Activated CD4-positive, alpha-beta memory T cell treated with anti-CD3 and anti-CD28 coated beads, Interleukin-2, amount 10 ng/mL, durations not matched to agents 7 days and 5 days (primary cell): ENCODE measurements at regions of chr20 and their contacts with region 1.

Region 1: DNA sequence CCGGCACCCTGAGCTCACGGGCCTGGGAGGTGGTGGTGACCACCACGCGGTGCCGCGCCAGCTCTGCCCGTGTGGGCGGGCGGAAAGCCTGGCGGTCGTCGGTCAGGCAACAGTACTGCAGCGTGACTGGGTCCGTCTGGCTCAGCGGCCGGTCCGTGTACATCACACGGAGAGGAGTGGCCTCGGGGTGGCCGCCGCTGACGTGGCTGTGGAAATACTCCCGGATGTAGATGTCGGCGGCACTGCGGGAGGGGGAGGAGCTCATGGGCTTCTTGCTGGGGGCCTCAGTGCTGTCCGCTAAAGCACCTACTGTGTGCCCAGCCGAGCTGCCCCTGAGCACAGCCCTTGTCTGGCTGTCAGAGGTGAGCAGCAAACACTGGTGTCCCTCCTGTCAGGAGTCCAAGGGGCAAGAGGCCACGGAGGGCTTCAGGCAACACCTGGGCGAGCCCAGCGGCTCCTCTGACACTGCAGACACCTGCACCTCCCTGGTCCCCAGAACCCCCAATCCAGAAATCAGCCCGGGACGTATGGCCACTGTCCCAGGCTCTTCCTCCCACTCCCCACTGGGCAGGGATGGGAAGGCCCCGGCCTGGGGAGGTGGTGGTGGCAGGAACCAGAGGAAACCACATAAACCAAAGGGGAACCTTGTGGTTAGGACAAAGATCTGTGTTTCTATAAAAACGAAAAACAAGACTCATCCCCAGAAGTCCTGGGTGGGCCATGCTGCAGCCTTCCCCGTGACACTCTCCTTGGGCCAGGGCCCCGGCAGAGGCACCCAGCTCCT is 6.5 kb downstream of the HELZ2 start:
- DNase-seq: peak; percentile 76
- H3K4me3 Mint-ChIP-seq: peak overlapping the region; percentile 63
- H3K27ac Mint-ChIP-seq: peak overlapping the region; percentile 73
- H3K4me1 Mint-ChIP-seq: peaks cover 32% of the 10 kb centered on the region
- H3K27me3 Mint-ChIP-seq: no peaks in the 10 kb centered on the region

Region 2: GRCh38 chr20:63434599-63435378 is 132.8 kb before region 1 on chr20:
- CTCF ChIA-PET with region 1: no interaction called
- POLR2A ChIA-PET with region 1: no interaction called
- DNase-seq: peak; percentile 83
- H3K4me3 Mint-ChIP-seq: no peak overlapping the region
- H3K27ac Mint-ChIP-seq: peak overlapping the region; percentile 55
- H3K4me1 Mint-ChIP-seq: peaks cover 10% of the 10 kb centered on the region
- H3K27me3 Mint-ChIP-seq: peaks cover 10% of the 10 kb centered on the region

Region 3: GRCh38 chr20:63553227-63553932 is 14.2 kb before region 1 on chr20:
- CTCF ChIA-PET with region 1: no interaction called
- POLR2A ChIA-PET with region 1: interaction called, 19 read pairs
- DNase-seq: peak; percentile 90
- H3K4me3 Mint-ChIP-seq: peak overlapping the region; percentile 41
- H3K27ac Mint-ChIP-seq: peak overlapping the region; percentile 77
- H3K4me1 Mint-ChIP-seq: peaks cover 15% of the 10 kb centered on the region
- H3K27me3 Mint-ChIP-seq: peaks cover 23% of the 10 kb centered on the region

Region 4: GRCh38 chr20:63617092-63617865 is 49.7 kb after region 1 on chr20:
- CTCF ChIA-PET with region 1: no interaction called
- POLR2A ChIA-PET with region 1: no interaction called
- DNase-seq: no peak
- H3K4me3 Mint-ChIP-seq: no peak overlapping the region
- H3K27ac Mint-ChIP-seq: no peak overlapping the region
- H3K4me1 Mint-ChIP-seq: peaks cover 4% of the 10 kb centered on the region
- H3K27me3 Mint-ChIP-seq: no peaks in the 10 kb centered on the region

Region 5: GRCh38 chr20:63635431-63636141 is 68.0 kb after region 1 on chr20:
- CTCF ChIA-PET with region 1: no interaction called
- POLR2A ChIA-PET with region 1: interaction called, 11 read pairs
- DNase-seq: peak; percentile 86
- H3K4me3 Mint-ChIP-seq: peak overlapping the region; percentile 49
- H3K27ac Mint-ChIP-seq: peak overlapping the region; percentile 96
- H3K4me1 Mint-ChIP-seq: peaks cover 56% of the 10 kb centered on the region
- H3K27me3 Mint-ChIP-seq: no peaks in the 10 kb centered on the region